ENCODE measurements at regions of chr1 and their contacts with region 1.

Region 1: GRCh38 chr1:197868751-197869489 is 33.5 kb upstream of the C1orf53 start:
- DNase-seq: peak in 1 of 3 donors; percentile 69
- ATAC-seq: peak; percentile 95
- H3K4me3 ChIP-seq: no peak overlapping the region
- H3K4me1 ChIP-seq: no peaks in the 10 kb centered on the region
- CTCF ChIP-seq: peak; percentile 35

Region 2: GRCh38 chr1:197614916-197615692 is 253.8 kb before region 1 on chr1:
- intact Hi-C with region 1: loop called (anchors 5 to 10 kb)
- DNase-seq: peak in 1 of 3 donors; percentile 40
- ATAC-seq: peak; percentile 87
- H3K4me3 ChIP-seq: no peak overlapping the region
- H3K4me1 ChIP-seq: no peaks in the 10 kb centered on the region
- CTCF ChIP-seq: no peak

Region 3: GRCh38 chr1:197807216-197807615 is 61.7 kb before region 1 on chr1:
- intact Hi-C with region 1: no loop called
- DNase-seq: no peak
- ATAC-seq: peak; percentile 78
- H3K4me3 ChIP-seq: no peak overlapping the region
- H3K4me1 ChIP-seq: peaks cover 12% of the 10 kb centered on the region
- CTCF ChIP-seq: no peak

Region 4: GRCh38 chr1:197937892-197938291 is 69.0 kb after region 1 on chr1:
- intact Hi-C with region 1: no loop called
- DNase-seq: no peak
- ATAC-seq: no peak
- H3K4me3 ChIP-seq: no peak overlapping the region
- H3K4me1 ChIP-seq: no peaks in the 10 kb centered on the region
- CTCF ChIP-seq: no peak